Activated CD8-positive, alpha-beta T cell treated with anti-CD3 and anti-CD28 coated beads for 36 hours (primary cell): ENCODE measurements at regions of chr5 and their contacts with region 1.

Region 1: GRCh38 chr5:158695595-158696330 is 404.0 kb downstream of the EBF1 start:
- DNase-seq: peak; percentile 79
- ATAC-seq: peak; percentile 80
- H3K4me3 Mint-ChIP-seq: no peak overlapping the region
- H3K27ac Mint-ChIP-seq: no peak overlapping the region
- H3K4me1 Mint-ChIP-seq: peaks cover 2% of the 10 kb centered on the region
- H3K27me3 Mint-ChIP-seq: no peaks in the 10 kb centered on the region
- CTCF ChIP-seq: peak; percentile 98

Region 2: DNA sequence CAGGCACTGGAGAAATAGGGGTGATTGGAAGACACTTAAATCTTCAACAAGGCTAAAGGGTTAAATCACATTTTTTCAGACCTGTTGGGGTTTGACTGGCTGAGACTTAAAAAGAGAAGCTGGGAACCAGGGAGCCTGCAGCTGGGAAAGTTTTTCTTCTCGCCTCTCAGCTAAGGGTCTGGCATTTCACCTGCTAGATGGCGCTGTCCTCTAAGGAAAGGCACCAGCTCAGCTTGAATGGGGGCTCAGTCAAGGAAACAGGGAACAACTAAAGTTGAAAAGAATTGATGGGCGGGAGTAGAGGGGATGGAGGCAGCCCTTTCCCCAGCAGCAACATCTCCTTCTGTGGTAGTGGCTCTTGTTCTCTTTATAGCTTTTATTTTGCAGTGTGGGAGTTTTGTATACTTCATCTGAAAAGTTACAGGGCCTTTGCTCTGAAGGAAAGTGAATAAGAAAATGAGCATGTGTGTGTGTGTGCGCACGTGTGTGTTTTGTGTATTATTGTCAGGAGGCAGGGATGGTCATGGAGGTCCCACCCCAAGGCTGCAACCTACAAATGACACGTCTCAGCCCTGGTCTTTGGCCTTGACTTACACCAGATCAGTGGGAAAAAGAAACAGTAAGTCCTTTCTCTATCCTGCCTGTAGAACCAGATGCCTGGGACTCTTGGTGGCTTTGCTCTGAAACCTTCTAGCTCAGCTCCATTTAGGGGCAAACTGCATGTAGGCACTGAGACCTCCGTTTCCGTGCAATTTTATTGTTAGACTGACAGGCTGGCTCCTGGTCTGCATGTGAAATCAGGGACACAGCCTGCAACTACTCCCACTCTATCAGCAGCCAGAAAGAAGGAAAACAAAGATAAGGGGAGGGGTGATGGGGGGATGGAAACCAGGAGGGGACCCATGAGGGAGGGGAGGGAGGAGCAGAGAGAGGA is 520.6 kb before region 1 on chr5:
- CTCF ChIA-PET with region 1: interaction called, 19 read pairs
- POLR2A ChIA-PET with region 1: no interaction called
- intact Hi-C with region 1: loop called (anchors 10 kb)
- DNase-seq: peak; percentile 72
- ATAC-seq: peak; percentile 42
- H3K4me3 Mint-ChIP-seq: no peak overlapping the region
- H3K27ac Mint-ChIP-seq: no peak overlapping the region
- H3K4me1 Mint-ChIP-seq: no peaks in the 10 kb centered on the region
- H3K27me3 Mint-ChIP-seq: no peaks in the 10 kb centered on the region
- CTCF ChIP-seq: peak; percentile 76

Region 3: DNA sequence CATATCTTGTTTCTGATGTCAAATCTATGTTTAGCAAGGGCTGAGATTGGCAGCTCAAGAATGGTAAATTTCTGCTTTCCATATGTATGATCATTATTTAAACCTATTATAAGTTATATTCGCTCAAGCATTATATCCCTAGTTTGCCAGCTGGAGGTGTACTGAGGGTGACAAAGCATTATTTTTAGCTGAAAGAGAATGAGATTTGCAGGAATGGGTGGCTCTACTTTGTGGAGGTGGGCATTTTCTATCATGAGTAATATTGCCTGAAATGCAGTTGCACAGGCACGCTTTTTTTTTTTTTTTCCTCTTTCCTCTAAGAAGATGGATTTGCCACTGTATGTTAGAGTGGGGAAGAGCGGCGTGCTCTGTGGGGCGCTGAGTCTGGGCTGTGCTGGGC is 10.1 kb after region 1 on chr5:
- CTCF ChIA-PET with region 1: interaction called, 10 read pairs
- POLR2A ChIA-PET with region 1: no interaction called
- intact Hi-C with region 1: no loop called
- DNase-seq: no peak
- ATAC-seq: no peak
- H3K4me3 Mint-ChIP-seq: no peak overlapping the region
- H3K27ac Mint-ChIP-seq: no peak overlapping the region
- H3K4me1 Mint-ChIP-seq: no peaks in the 10 kb centered on the region
- H3K27me3 Mint-ChIP-seq: no peaks in the 10 kb centered on the region
- CTCF ChIP-seq: no peak

Region 4: DNA sequence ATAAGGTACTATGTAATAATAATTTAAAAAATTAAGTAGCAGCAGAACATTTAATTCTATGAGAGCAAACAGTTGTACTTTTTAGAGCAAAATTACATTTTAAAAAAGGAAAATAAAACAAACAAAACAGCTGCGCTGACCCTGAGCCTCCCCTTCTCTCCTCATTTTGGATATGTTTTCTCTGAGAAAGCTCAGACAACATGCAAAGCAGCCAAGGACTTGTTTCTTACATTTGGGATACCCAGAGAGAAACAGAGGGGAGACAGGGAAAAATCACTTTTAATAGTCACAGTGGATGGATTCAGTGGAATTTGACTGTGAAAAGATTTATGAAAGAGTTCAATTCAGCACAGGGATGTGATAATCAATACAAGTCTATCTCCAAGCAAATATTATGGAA is 104.7 kb after region 1 on chr5:
- CTCF ChIA-PET with region 1: no interaction called
- POLR2A ChIA-PET with region 1: no interaction called
- intact Hi-C with region 1: no loop called
- DNase-seq: no peak
- ATAC-seq: no peak
- H3K4me3 Mint-ChIP-seq: no peak overlapping the region
- H3K27ac Mint-ChIP-seq: no peak overlapping the region
- H3K4me1 Mint-ChIP-seq: no peaks in the 10 kb centered on the region
- H3K27me3 Mint-ChIP-seq: no peaks in the 10 kb centered on the region
- CTCF ChIP-seq: no peak

Region 5: GRCh38 chr5:159094745-159095144 is 399.0 kb after region 1 on chr5:
- CTCF ChIA-PET with region 1: interaction called, 15 read pairs
- POLR2A ChIA-PET with region 1: no interaction called
- intact Hi-C with region 1: no loop called
- DNase-seq: peak; percentile 85
- ATAC-seq: no peak
- H3K4me3 Mint-ChIP-seq: no peak overlapping the region
- H3K27ac Mint-ChIP-seq: no peak overlapping the region
- H3K4me1 Mint-ChIP-seq: peaks cover 29% of the 10 kb centered on the region
- H3K27me3 Mint-ChIP-seq: peaks cover 36% of the 10 kb centered on the region
- CTCF ChIP-seq: no peak

Region 6: GRCh38 chr5:159106569-159107282 is 411.0 kb after region 1 on chr5:
- CTCF ChIA-PET with region 1: interaction called, 193 read pairs
- POLR2A ChIA-PET with region 1: no interaction called
- intact Hi-C with region 1: loop called (anchors 1 kb)
- DNase-seq: peak; percentile 82
- ATAC-seq: peak; percentile 83
- H3K4me3 Mint-ChIP-seq: peak overlapping the region; percentile 56
- H3K27ac Mint-ChIP-seq: no peak overlapping the region
- H3K4me1 Mint-ChIP-seq: peaks cover 15% of the 10 kb centered on the region
- H3K27me3 Mint-ChIP-seq: peaks cover 45% of the 10 kb centered on the region
- CTCF ChIP-seq: peak; percentile 94